Heart right ventricle (tissue), 16 donors: ENCODE measurements at regions of chr5 and their contacts with region 1.

Region 1: GRCh38 chr5:171418316-171418981 is 998 bp upstream of the FGF18 start:
- DNase-seq: peak; percentile 85
- ATAC-seq: peak; percentile 78 to 90 (median 86)
- H3K4me3 ChIP-seq: peak overlapping the region in 9 of 10 donors; percentile 42 to 66 (median 55)
- H3K27ac ChIP-seq: peak overlapping the region in 7 of 10 donors; percentile 7 to 90 (median 78)
- H3K4me1 ChIP-seq: peaks cover 15 to 48% (median 31%) of the 10 kb centered on the region in 9 donors
- H3K27me3 ChIP-seq: peaks cover 0 to 35% (median 0%) of the 10 kb centered on the region in 7 donors
- CTCF ChIP-seq: peak; percentile 84 to 98 (median 95)

Region 2: DNA sequence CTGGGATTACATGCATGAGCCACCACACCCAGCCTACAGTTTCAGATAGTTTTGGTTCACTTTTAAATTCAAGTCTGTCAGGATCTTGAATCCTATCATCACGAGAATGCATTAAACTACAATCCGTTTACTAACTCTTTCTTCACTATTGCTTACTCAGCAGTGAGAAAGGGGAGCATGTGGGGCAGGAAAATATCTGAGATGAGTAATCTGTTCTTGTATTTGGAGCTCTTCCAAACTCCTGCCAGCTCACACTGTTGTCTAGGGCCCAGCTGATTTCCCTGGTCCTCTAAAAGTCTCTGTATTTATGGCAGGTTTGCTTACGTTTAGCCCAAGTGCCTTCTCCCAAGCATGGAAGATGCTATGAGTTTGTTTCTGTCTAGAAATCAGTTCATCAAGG is 153.2 kb after region 1 on chr5:
- intact Hi-C with region 1: loop called in 1 of 10 experiments (anchors 10 kb)
- DNase-seq: no peak
- ATAC-seq: no peak
- H3K4me3 ChIP-seq: no peak overlapping the region
- H3K27ac ChIP-seq: no peak overlapping the region
- H3K4me1 ChIP-seq: peaks cover 0 to 23% (median 0%) of the 10 kb centered on the region in 9 donors
- H3K27me3 ChIP-seq: no peaks in the 10 kb centered on the region
- CTCF ChIP-seq: no peak

Region 3: GRCh38 chr5:171630027-171630669 is 211.7 kb after region 1 on chr5:
- intact Hi-C with region 1: loop called in 5 of 10 experiments (anchors 2 to 10 kb)
- DNase-seq: peak; percentile 61 to 70
- ATAC-seq: peak; percentile 87 to 96 (median 92)
- H3K4me3 ChIP-seq: peak overlapping the region in 6 of 10 donors; percentile 4 to 34 (median 18)
- H3K27ac ChIP-seq: no peak overlapping the region
- H3K4me1 ChIP-seq: peaks cover 0 to 31% (median 13%) of the 10 kb centered on the region in 9 donors
- H3K27me3 ChIP-seq: peaks cover 0 to 4% (median 0%) of the 10 kb centered on the region in 7 donors
- CTCF ChIP-seq: peak; percentile 29 to 74 (median 54)

Region 4: GRCh38 chr5:171850324-171851285 is 432.2 kb after region 1 on chr5:
- intact Hi-C with region 1: loop called in 8 of 10 experiments (anchors 2 to 5 kb)
- DNase-seq: no peak
- ATAC-seq: peak in 5 of 8 donors; percentile 10 to 46 (median 15)
- H3K4me3 ChIP-seq: no peak overlapping the region
- H3K27ac ChIP-seq: peak overlapping the region in 2 of 10 donors; percentile 29 to 35
- H3K4me1 ChIP-seq: peaks cover 0 to 22% (median 9%) of the 10 kb centered on the region in 9 donors
- H3K27me3 ChIP-seq: no peaks in the 10 kb centered on the region
- CTCF ChIP-seq: peak in 6 of 9 donors; percentile 17 to 42 (median 22)

Region 5: GRCh38 chr5:172035039-172035438 is 616.6 kb after region 1 on chr5:
- intact Hi-C with region 1: loop called in 5 of 10 experiments (anchors 10 kb)
- DNase-seq: no peak
- ATAC-seq: no peak
- H3K4me3 ChIP-seq: no peak overlapping the region
- H3K27ac ChIP-seq: no peak overlapping the region
- H3K4me1 ChIP-seq: peaks cover 0 to 5% (median 0%) of the 10 kb centered on the region in 9 donors
- H3K27me3 ChIP-seq: no peaks in the 10 kb centered on the region
- CTCF ChIP-seq: no peak

Region 6: DNA sequence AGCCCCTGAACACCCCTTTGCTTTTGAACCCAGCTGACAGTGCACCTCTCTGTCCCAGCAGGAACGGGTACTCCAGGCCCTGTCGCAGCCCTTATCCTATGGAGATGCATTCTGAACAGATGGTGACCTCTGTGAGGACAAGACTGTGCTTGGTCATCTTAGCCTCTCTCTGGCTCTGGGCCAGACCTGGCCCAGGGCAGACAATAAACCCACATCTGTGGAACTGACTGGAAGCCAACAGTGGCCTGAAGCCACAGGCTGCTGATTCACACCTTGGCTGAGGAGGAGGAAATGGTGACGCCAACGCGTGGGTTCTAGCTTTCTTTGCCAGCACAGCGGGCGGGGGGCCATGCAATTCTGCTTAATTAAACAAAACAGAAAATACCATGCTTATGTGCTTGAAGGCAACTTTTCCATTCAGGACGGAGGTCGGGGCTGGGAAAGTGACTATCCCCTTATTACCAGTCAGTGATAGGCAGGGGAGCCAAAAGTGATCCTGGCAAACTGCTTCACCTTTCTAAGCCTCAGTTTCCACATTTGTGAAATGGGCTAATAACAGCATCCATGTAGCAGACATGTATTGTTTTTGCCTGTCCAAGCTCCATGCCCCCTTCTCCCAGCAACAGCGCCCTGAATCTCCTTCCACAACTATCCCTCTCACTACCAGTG is 1025.1 kb after region 1 on chr5:
- intact Hi-C with region 1: loop called in 1 of 10 experiments (anchors 10 kb)
- DNase-seq: peak; percentile 80 to 87
- ATAC-seq: peak; percentile 65 to 91 (median 82)
- H3K4me3 ChIP-seq: no peak overlapping the region
- H3K27ac ChIP-seq: peak overlapping the region in 9 of 10 donors; percentile 14 to 82 (median 74)
- H3K4me1 ChIP-seq: peaks cover 19 to 69% (median 52%) of the 10 kb centered on the region in 9 donors
- H3K27me3 ChIP-seq: no peaks in the 10 kb centered on the region
- CTCF ChIP-seq: no peak